Panc1 (cell line): ENCODE measurements at regions of chr2 and their contacts with region 1.

Region 1: GRCh38 chr2:61922714-61923113 is 17.2 kb downstream of the COMMD1 start:
- DNase-seq: no peak
- ATAC-seq: no peak
- H3K4me3 ChIP-seq: no peak overlapping the region
- H3K27ac ChIP-seq: no peak overlapping the region
- H3K4me1 ChIP-seq: no peaks in the 10 kb centered on the region
- H3K27me3 ChIP-seq: no peaks in the 10 kb centered on the region
- CTCF ChIP-seq: no peak

Region 2: GRCh38 chr2:61549546-61549945 is 373.2 kb before region 1 on chr2:
- CTCF ChIA-PET with region 1: interaction called, 15 read pairs
- POLR2A ChIA-PET with region 1: no interaction called
- in situ Hi-C with region 1: no loop called
- intact Hi-C with region 1: no loop called
- DNase-seq: no peak
- ATAC-seq: no peak
- H3K4me3 ChIP-seq: no peak overlapping the region
- H3K27ac ChIP-seq: no peak overlapping the region
- H3K4me1 ChIP-seq: no peaks in the 10 kb centered on the region
- H3K27me3 ChIP-seq: no peaks in the 10 kb centered on the region
- CTCF ChIP-seq: no peak

Region 3: GRCh38 chr2:61792355-61792890 is 130.3 kb before region 1 on chr2:
- CTCF ChIA-PET with region 1: no interaction called
- POLR2A ChIA-PET with region 1: no interaction called
- in situ Hi-C with region 1: no loop called
- intact Hi-C with region 1: no loop called
- DNase-seq: no peak
- ATAC-seq: no peak
- H3K4me3 ChIP-seq: no peak overlapping the region
- H3K27ac ChIP-seq: no peak overlapping the region
- H3K4me1 ChIP-seq: no peaks in the 10 kb centered on the region
- H3K27me3 ChIP-seq: no peaks in the 10 kb centered on the region; the same call in 1 of the 2 replicates
- CTCF ChIP-seq: no peak

Region 4: GRCh38 chr2:62014102-62014501 is 91.4 kb after region 1 on chr2:
- CTCF ChIA-PET with region 1: no interaction called
- POLR2A ChIA-PET with region 1: no interaction called
- in situ Hi-C with region 1: no loop called
- intact Hi-C with region 1: no loop called
- DNase-seq: no peak
- ATAC-seq: peak; percentile 48; the same call in 1 of the 2 replicates
- H3K4me3 ChIP-seq: no peak overlapping the region
- H3K27ac ChIP-seq: no peak overlapping the region
- H3K4me1 ChIP-seq: no peaks in the 10 kb centered on the region
- H3K27me3 ChIP-seq: no peaks in the 10 kb centered on the region
- CTCF ChIP-seq: no peak

Region 5: GRCh38 chr2:62231541-62231940 is 308.8 kb after region 1 on chr2:
- CTCF ChIA-PET with region 1: interaction called, 14 read pairs
- POLR2A ChIA-PET with region 1: no interaction called
- in situ Hi-C with region 1: no loop called
- intact Hi-C with region 1: no loop called
- DNase-seq: no peak
- ATAC-seq: no peak
- H3K4me3 ChIP-seq: no peak overlapping the region
- H3K27ac ChIP-seq: no peak overlapping the region
- H3K4me1 ChIP-seq: no peaks in the 10 kb centered on the region
- H3K27me3 ChIP-seq: no peaks in the 10 kb centered on the region
- CTCF ChIP-seq: no peak